ENCODE measurements at regions of chr3 and their contacts with region 1.

Region 1: DNA sequence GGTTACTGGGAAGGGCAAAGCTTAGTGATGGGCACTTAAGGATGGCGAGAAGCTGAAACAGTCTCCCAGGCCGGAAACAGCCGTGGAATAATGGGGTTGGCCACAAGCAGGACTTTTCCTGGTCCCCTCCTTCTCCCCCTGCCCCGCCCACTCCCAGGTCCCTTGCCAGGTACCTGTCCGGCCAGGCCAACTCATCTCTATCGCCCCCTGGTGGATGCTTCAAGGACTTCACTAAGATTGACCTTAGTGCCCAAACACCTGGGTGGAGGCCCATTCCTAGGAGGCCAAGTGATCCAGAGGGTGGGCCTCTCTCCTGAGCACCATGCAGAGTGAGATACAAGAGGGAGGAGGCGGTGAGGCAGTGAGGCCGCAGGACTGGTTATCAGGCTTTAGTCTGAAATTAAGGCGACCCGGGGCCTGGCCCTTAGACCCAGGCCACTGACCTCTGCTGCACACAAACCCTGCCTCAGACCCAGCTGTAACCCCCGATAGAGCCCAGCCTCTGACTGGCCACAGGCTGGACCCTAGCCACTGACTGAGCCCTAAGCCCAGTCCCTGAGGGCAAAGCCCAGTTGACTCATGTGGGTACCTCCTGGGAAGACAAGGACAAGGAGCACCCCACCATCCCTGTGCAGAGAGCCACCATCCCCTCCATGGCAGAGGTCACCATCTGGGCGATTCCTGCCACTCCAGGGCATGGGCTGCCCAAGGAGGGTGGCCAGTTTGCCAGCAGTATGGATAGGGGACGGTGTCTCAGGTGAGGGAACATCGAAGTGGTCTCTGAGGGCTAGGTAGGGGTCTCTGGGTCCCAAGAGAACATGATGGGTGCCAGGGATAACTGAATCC is 37.6 kb downstream of the VIPR1 start:
- H3K4me3 Mint-ChIP-seq: no peak overlapping the region
- H3K27ac Mint-ChIP-seq: no peak overlapping the region
- H3K4me1 Mint-ChIP-seq: peaks cover 7% of the 10 kb centered on the region
- H3K27me3 Mint-ChIP-seq: peaks cover 5% of the 10 kb centered on the region

Region 2: DNA sequence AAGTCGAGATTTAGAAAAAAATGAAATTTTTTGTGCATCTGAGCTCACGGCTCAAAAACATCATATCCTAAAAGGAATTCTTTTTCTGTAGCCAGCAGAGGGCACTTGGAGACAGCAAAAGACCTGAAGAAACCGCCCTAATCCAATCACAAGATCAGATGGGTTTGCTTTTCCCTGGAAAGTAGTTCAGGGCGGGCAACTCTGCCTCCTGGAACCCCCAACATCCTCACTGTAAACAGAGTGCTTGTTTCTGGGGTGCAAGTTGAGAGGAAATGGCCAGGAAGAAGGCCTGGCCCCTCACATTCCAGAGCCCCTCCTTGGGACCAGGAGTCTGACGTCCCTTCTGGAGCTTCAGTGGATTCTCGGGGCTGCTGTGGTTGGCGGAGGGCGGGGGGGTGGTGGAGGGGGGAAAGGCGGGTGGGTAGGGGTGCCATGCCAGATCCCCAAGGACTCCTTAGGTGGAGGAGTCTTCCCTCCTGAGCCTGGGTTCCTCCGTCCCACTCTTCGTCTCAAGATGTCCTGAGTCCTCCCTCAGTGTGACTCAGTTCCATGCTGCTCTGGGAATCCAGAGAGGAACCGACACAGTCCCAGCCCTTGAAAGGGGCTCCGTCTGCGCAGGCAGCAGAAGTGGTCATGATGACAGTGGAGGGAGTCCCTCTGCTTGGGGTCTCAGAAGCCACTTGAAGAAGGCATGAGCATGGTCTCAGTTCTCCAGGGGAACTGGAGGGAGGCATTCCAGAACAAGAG is 310.0 kb before region 1 on chr3:
- intact Hi-C with region 1: loop called (anchors 5 kb)
- H3K4me3 Mint-ChIP-seq: no peak overlapping the region
- H3K27ac Mint-ChIP-seq: no peak overlapping the region
- H3K4me1 Mint-ChIP-seq: no peaks in the 10 kb centered on the region
- H3K27me3 Mint-ChIP-seq: peaks cover 12% of the 10 kb centered on the region

Region 3: DNA sequence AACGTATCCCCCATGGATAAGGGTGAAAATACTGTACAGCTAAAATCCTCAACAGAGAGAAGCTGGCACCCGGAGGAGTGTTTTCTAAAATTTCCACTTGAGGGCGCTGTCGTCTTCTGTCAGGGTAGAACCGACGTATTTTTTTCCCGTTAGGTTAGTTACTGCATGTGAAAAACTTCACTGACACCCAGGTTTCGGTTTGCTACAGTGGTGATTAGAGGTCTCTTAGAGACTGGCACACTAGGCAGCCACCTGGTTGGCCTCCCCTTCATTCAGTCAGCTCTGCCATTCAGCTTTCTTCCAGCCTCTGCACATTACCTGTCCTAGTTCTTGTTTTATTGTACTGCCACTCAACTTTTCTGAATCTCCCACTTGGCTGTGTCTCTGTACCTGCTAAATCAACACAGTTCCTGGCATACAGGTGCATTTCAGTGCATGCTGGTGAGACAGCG is 292.5 kb before region 1 on chr3:
- intact Hi-C with region 1: loop called (anchors 5 kb)
- H3K4me3 Mint-ChIP-seq: no peak overlapping the region
- H3K27ac Mint-ChIP-seq: no peak overlapping the region
- H3K4me1 Mint-ChIP-seq: no peaks in the 10 kb centered on the region
- H3K27me3 Mint-ChIP-seq: peaks cover 25% of the 10 kb centered on the region

Region 4: DNA sequence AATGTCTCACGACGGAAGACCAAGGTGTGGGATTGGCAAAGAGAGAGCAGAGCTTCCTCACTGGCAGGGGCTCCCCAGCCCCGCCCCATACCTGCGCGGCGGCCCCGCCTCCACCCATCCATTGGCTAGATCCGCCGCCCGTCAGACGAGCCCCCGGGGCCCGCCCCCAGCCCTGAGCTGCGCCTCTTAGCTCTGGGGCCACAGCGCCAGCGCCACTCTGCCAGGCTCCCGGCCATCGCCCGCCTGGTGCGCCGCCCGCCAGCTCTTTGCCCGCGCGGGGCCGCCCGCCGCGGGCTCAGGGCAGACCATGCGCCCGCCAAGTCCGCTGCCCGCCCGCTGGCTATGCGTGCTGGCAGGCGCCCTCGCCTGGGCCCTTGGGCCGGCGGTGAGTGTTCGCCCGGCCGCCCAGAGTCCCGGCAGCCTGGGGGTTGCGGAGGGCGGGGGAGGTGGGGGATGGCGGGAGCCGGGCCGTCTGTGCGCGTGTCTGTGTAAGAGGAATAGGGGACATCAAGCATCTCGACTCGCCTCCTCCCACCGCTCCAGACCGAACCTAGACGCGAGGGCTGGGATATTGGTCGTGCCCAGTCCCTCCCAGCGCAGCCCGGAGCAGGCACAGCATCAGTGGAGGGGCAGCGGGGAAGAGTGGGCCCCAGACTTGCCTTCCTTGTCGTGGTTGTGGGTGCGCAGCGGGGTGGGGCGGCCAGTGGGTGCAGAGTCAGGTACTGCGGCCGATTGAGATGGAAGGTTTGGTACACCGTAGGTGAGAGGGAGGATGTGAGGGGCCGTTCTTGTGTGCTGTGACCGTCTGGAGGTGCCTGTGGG is 37.5 kb before region 1 on chr3 and contains the start of gene VIPR1:
- intact Hi-C with region 1: loop called (anchors 1 kb)
- H3K4me3 Mint-ChIP-seq: peak within 1 kb of the TSS; percentile 71
- H3K27ac Mint-ChIP-seq: peak within 1 kb of the TSS; percentile 50
- H3K4me1 Mint-ChIP-seq: peaks cover 60% of the 10 kb centered on the region
- H3K27me3 Mint-ChIP-seq: peaks cover 50% of the 10 kb centered on the region

Measured in dendritic cell treated with granulocyte-macrophage colony-stimulating factor and Interleukin-4, amounts not matched to agents 40 ng/mL and 50 ng/mL, for 4 days (primary cell).